ENCODE measurements at regions of chr12 and their contacts with region 1.

Region 1: DNA sequence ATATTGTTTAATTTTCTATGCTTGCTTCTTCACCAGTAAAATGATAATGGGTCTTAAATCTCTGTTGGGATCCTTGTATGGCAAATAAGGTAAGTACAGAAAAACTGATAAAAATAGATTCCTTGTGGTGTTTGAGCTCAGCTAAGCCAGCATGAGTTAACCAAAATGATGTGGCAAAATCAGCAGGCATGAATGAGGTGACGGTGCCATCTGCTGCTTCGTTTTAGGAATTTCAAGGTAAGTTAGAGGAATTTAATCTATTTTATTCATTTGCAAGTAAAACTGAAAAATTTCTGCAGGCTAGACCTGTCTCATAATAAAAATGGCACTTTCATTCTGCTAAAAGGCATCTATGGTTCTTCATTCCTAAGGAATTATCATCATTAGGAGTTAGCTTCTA is 10.0 kb upstream of the CLEC7A start:
- DNase-seq: peak in 32 of 35 experiments; percentile 8 to 71 (median 30)
- ATAC-seq: peak in 1 of 4 experiments; percentile 45
- H3K4me3 ChIP-seq: no peak overlapping the region
- H3K4me3 Mint-ChIP-seq: no peak overlapping the region
- H3K27ac ChIP-seq: no peak overlapping the region
- H3K27ac Mint-ChIP-seq: no peak overlapping the region
- H3K4me1 ChIP-seq: no peaks in the 10 kb centered on the region
- H3K4me1 Mint-ChIP-seq: no peaks in the 10 kb centered on the region
- H3K27me3 ChIP-seq: peaks cover 0 to 3% of the 10 kb centered on the region in 2 experiments
- H3K27me3 Mint-ChIP-seq: peaks cover 0 to 8% of the 10 kb centered on the region in 2 donors

Region 2: GRCh38 chr12:9378430-9378835 is 761.6 kb before region 1 on chr12:
- CTCF ChIA-PET with region 1: interaction called in 1 of 2 experiments, 10 read pairs
- POLR2A ChIA-PET with region 1: no interaction called
- DNase-seq: no peak
- ATAC-seq: no peak
- H3K4me3 ChIP-seq: no peak overlapping the region
- H3K4me3 Mint-ChIP-seq: no peak overlapping the region
- H3K27ac ChIP-seq: no peak overlapping the region
- H3K27ac Mint-ChIP-seq: no peak overlapping the region
- H3K4me1 ChIP-seq: no peaks in the 10 kb centered on the region
- H3K4me1 Mint-ChIP-seq: peaks cover 0 to 5% (median 0%) of the 10 kb centered on the region in 3 donors
- H3K27me3 ChIP-seq: no peaks in the 10 kb centered on the region
- H3K27me3 Mint-ChIP-seq: peaks cover 0 to 2% of the 10 kb centered on the region in 2 donors

Region 3: DNA sequence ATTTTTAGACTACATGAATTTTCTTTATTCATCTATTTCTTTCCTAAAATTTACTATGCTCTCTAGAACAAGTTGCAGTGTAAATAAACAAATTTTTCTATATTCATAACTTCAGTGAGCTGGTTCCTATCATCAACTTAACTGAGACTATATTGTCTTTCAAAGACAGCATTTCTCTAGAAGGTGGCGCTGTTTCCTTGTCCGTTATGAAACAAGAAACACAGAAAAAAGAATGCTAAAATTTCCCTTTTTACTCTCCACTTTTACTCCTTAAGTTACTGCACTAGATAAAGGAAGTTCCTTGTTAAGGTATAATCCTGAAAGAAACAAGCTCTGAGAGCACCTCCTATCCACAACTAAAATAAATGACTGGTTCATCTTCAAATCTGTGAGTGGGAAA is 199.6 kb before region 1 on chr12:
- CTCF ChIA-PET with region 1: interaction called, 7 to 13 read pairs
- POLR2A ChIA-PET with region 1: no interaction called
- DNase-seq: peak in 3 of 35 experiments; percentile 4 to 50 (median 13)
- ATAC-seq: no peak
- H3K4me3 ChIP-seq: no peak overlapping the region
- H3K4me3 Mint-ChIP-seq: no peak overlapping the region
- H3K27ac ChIP-seq: no peak overlapping the region
- H3K27ac Mint-ChIP-seq: no peak overlapping the region
- H3K4me1 ChIP-seq: peaks cover 0 to 3% of the 10 kb centered on the region in 2 experiments
- H3K4me1 Mint-ChIP-seq: peaks cover 8 to 16% (median 13%) of the 10 kb centered on the region in 3 donors
- H3K27me3 ChIP-seq: peaks cover 0 to 6% of the 10 kb centered on the region in 2 experiments
- H3K27me3 Mint-ChIP-seq: peaks cover 0 to 10% of the 10 kb centered on the region in 2 donors

Measured in T-cell (primary cell).